Naive thymus-derived CD4-positive, alpha-beta T cell (primary cell): ENCODE measurements at regions of chr7 and their contacts with region 1.

Region 1: GRCh38 chr7:92633211-92633906 is 43.2 kb upstream of the FAM133B start:
- DNase-seq: peak in 1 of 9 donors; percentile 13
- ATAC-seq: peak; percentile 76
- H3K4me3 ChIP-seq: no peak overlapping the region
- H3K4me3 Mint-ChIP-seq: peak overlapping the region in 3 of 10 donors; percentile 23 to 70 (median 57)
- H3K27ac ChIP-seq: no peak overlapping the region
- H3K27ac Mint-ChIP-seq: peak overlapping the region in 3 of 9 donors; percentile 50 to 87 (median 53)
- H3K4me1 ChIP-seq: peaks cover 3 to 18% of the 10 kb centered on the region in 2 donors
- H3K4me1 Mint-ChIP-seq: peaks cover 20 to 56% (median 34%) of the 10 kb centered on the region in 7 donors
- H3K27me3 ChIP-seq: no peaks in the 10 kb centered on the region
- H3K27me3 Mint-ChIP-seq: no peaks in the 10 kb centered on the region

Region 2: GRCh38 chr7:92669616-92670165 is 36.3 kb after region 1 on chr7:
- CTCF ChIA-PET with region 1: no interaction called
- POLR2A ChIA-PET with region 1: interaction called, 3 read pairs
- intact Hi-C with region 1: loop called in 1 of 2 experiments (anchors 2 kb)
- DNase-seq: no peak
- ATAC-seq: no peak
- H3K4me3 ChIP-seq: no peak overlapping the region
- H3K4me3 Mint-ChIP-seq: peak overlapping the region in 1 of 10 donors; percentile 23
- H3K27ac ChIP-seq: no peak overlapping the region
- H3K27ac Mint-ChIP-seq: peak overlapping the region in 2 of 9 donors; percentile 52 to 53
- H3K4me1 ChIP-seq: no peaks in the 10 kb centered on the region
- H3K4me1 Mint-ChIP-seq: peaks cover 9 to 72% (median 18%) of the 10 kb centered on the region in 7 donors
- H3K27me3 ChIP-seq: no peaks in the 10 kb centered on the region
- H3K27me3 Mint-ChIP-seq: no peaks in the 10 kb centered on the region

Region 3: GRCh38 chr7:92916674-92917224 is 283.4 kb after region 1 on chr7:
- CTCF ChIA-PET with region 1: no interaction called
- POLR2A ChIA-PET with region 1: no interaction called
- intact Hi-C with region 1: no loop called
- DNase-seq: no peak
- ATAC-seq: no peak
- H3K4me3 ChIP-seq: no peak overlapping the region
- H3K4me3 Mint-ChIP-seq: no peak overlapping the region
- H3K27ac ChIP-seq: no peak overlapping the region
- H3K27ac Mint-ChIP-seq: no peak overlapping the region
- H3K4me1 ChIP-seq: no peaks in the 10 kb centered on the region
- H3K4me1 Mint-ChIP-seq: no peaks in the 10 kb centered on the region
- H3K27me3 ChIP-seq: no peaks in the 10 kb centered on the region
- H3K27me3 Mint-ChIP-seq: peaks cover 0 to 4% (median 0%) of the 10 kb centered on the region in 5 donors

Region 4: DNA sequence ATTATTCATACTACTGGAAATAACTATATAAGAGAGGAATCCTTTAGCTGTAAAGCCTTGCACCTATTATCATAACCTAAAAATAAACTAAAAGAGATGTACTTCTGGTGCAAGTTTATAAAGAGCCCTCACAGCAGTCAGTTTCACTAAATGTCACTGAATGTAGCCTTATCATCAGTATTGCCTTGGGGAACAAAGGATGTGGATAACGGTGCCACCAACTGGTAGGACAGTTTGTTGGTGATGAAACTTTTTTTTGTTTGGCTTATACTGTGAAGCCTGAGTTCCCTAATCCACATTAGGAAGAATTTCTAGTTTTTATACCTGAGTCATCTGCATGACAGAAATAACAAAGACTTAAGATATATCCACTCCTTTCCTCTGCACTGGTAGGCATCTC is 1643.4 kb after region 1 on chr7:
- CTCF ChIA-PET with region 1: no interaction called
- POLR2A ChIA-PET with region 1: no interaction called
- intact Hi-C with region 1: no loop called
- DNase-seq: no peak
- ATAC-seq: no peak
- H3K4me3 ChIP-seq: no peak overlapping the region
- H3K4me3 Mint-ChIP-seq: no peak overlapping the region
- H3K27ac ChIP-seq: no peak overlapping the region
- H3K27ac Mint-ChIP-seq: no peak overlapping the region
- H3K4me1 ChIP-seq: no peaks in the 10 kb centered on the region
- H3K4me1 Mint-ChIP-seq: no peaks in the 10 kb centered on the region
- H3K27me3 ChIP-seq: no peaks in the 10 kb centered on the region
- H3K27me3 Mint-ChIP-seq: peaks cover 0 to 20% (median 7%) of the 10 kb centered on the region in 5 donors